ENCODE measurements at regions of chr15 and their contacts with region 1.

Region 1: GRCh38 chr15:79308878-79309277 is 2.0 kb upstream of the TMED3 start:
- DNase-seq: no peak
- ATAC-seq: no peak
- H3K4me3 Mint-ChIP-seq: no peak overlapping the region
- H3K27ac Mint-ChIP-seq: no peak overlapping the region
- H3K4me1 Mint-ChIP-seq: peaks cover 27% of the 10 kb centered on the region
- H3K27me3 Mint-ChIP-seq: peaks cover 52% of the 10 kb centered on the region

Region 2: GRCh38 chr15:79265167-79265566 is 43.7 kb before region 1 on chr15:
- POLR2A ChIA-PET with region 1: no interaction called
- DNase-seq: no peak
- ATAC-seq: no peak
- H3K4me3 Mint-ChIP-seq: no peak overlapping the region
- H3K27ac Mint-ChIP-seq: no peak overlapping the region
- H3K4me1 Mint-ChIP-seq: no peaks in the 10 kb centered on the region
- H3K27me3 Mint-ChIP-seq: peaks cover 14% of the 10 kb centered on the region

Region 3: GRCh38 chr15:79296583-79296982 is 12.3 kb before region 1 on chr15:
- POLR2A ChIA-PET with region 1: no interaction called
- DNase-seq: no peak
- ATAC-seq: no peak
- H3K4me3 Mint-ChIP-seq: no peak overlapping the region
- H3K27ac Mint-ChIP-seq: no peak overlapping the region
- H3K4me1 Mint-ChIP-seq: no peaks in the 10 kb centered on the region
- H3K27me3 Mint-ChIP-seq: peaks cover 31% of the 10 kb centered on the region

Region 4: DNA sequence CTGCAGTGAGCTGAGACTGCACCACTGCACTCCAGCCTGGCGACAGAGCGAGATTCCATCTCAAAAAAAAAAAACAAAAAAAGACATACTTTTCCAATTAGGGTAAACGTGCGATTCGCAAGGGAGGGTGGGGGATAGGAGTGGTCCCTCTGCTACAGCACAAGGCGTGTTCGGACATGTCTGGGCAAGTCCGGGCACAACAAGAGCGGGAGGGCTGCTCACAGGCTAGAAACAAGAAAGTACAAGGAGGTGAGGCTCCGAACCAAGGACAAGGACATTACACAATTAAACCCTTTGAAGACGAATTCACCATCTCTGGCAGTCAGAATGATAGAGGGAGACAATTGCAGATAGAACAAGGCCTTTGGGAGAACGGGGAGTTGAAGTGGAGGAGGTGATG is 694.3 kb after region 1 on chr15:
- POLR2A ChIA-PET with region 1: interaction called, 10 read pairs
- DNase-seq: no peak
- ATAC-seq: no peak
- H3K4me3 Mint-ChIP-seq: no peak overlapping the region
- H3K27ac Mint-ChIP-seq: peak overlapping the region; percentile 31
- H3K4me1 Mint-ChIP-seq: no peaks in the 10 kb centered on the region
- H3K27me3 Mint-ChIP-seq: peaks cover 5% of the 10 kb centered on the region

Measured in activated naive CD8-positive, alpha-beta T cell treated with anti-CD3 and anti-CD28 coated beads, Interleukin-2, amount 10 ng/mL, durations not matched to agents 7 days and 5 days (primary cell).